Prostate gland (tissue), 2 donors: ENCODE measurements at regions of chr10 and their contacts with region 1.

Region 1: GRCh38 chr10:12729885-12730284 is 271.6 kb downstream of the CCDC3 start:
- DNase-seq: no peak
- H3K4me3 ChIP-seq: no peak overlapping the region
- H3K27ac ChIP-seq: no peak overlapping the region
- H3K4me1 ChIP-seq: no peaks in the 10 kb centered on the region
- H3K27me3 ChIP-seq: peaks cover 3% of the 10 kb centered on the region
- CTCF ChIP-seq: no peak
- POLR2A ChIP-seq: no peak

Region 2: DNA sequence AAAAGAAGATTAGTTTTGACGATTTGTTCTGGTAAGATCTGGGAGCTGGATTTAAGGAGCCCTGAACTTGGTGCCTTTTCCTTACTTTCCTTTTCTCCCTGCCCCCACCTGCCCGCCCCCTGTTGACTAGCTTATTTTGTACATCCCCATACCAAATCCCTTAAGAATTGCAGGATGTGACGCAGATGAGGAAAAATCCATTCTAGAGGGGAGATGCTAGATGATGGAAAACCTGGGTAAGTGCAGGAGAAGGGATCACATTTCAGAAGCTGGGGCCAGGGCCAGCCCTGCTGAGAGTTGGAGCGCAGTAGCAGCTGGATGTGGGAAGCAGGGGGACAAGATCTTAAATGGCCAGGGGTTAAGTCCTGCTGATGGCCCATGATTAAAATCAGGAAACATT is 177.8 kb after region 1 on chr10:
- intact Hi-C with region 1: loop called (anchors 5 kb)
- DNase-seq: no peak
- H3K4me3 ChIP-seq: no peak overlapping the region
- H3K27ac ChIP-seq: no peak overlapping the region
- H3K4me1 ChIP-seq: peaks cover 4% of the 10 kb centered on the region
- H3K27me3 ChIP-seq: no peaks in the 10 kb centered on the region
- CTCF ChIP-seq: no peak
- POLR2A ChIP-seq: no peak

Region 3: DNA sequence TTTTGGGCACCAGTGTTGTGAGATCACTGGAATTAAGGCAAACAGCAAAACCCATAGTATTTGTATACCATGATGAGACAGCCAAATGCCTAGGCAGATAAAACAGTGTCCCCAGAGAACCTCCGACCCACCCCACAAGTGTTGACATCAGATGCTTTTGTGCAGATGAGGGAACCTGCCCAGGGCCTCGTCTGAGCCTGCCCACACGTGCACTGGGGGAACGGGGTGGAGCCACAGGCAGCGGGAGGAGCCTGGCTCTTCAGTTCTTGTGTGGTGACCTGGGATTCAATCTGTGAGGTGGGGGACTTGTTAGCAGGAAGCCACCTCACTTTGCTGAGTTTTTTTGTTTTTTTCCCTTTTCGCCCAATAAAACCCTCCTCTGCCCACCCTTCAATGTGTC is 336.6 kb after region 1 on chr10:
- intact Hi-C with region 1: loop called (anchors 5 kb)
- DNase-seq: no peak
- H3K4me3 ChIP-seq: no peak overlapping the region
- H3K27ac ChIP-seq: no peak overlapping the region
- H3K4me1 ChIP-seq: no peaks in the 10 kb centered on the region
- H3K27me3 ChIP-seq: no peaks in the 10 kb centered on the region
- CTCF ChIP-seq: no peak
- POLR2A ChIP-seq: no peak